ENCODE measurements at regions of chr2 and their contacts with region 1.

Region 1: GRCh38 chr2:10057231-10058107 is 14.1 kb downstream of the KLF11 start:
- DNase-seq: peak; percentile 65
- ATAC-seq: peak; percentile 67
- H3K4me3 Mint-ChIP-seq: no peak overlapping the region
- H3K27ac Mint-ChIP-seq: no peak overlapping the region
- H3K4me1 Mint-ChIP-seq: peaks cover 6% of the 10 kb centered on the region
- H3K27me3 Mint-ChIP-seq: peaks cover 2% of the 10 kb centered on the region
- CTCF ChIP-seq: no peak

Region 2: GRCh38 chr2:10043906-10044601 is 13.4 kb before region 1 on chr2:
- CTCF ChIA-PET with region 1: interaction called, 21 read pairs
- POLR2A ChIA-PET with region 1: interaction called, 3 read pairs
- intact Hi-C with region 1: no loop called
- DNase-seq: peak; percentile 95
- ATAC-seq: peak; percentile 82
- H3K4me3 Mint-ChIP-seq: peak overlapping the region; percentile 64
- H3K27ac Mint-ChIP-seq: peak overlapping the region; percentile 73
- H3K4me1 Mint-ChIP-seq: peaks cover 8% of the 10 kb centered on the region
- H3K27me3 Mint-ChIP-seq: peaks cover 2% of the 10 kb centered on the region
- CTCF ChIP-seq: no peak

Measured in activated CD8-positive, alpha-beta T cell treated with anti-CD3 and anti-CD28 coated beads for 36 hours (primary cell).